B cell (primary cell): ENCODE measurements at regions of chr1 and their contacts with region 1.

Region 1: GRCh38 chr1:109426278-109427170 is at the start of gene PSMA5:
- DNase-seq: peak; percentile 97
- ATAC-seq: peak; percentile 95
- H3K4me3 ChIP-seq: peak within 1 kb of the TSS; percentile 72 to 98 (median 79)
- H3K4me3 Mint-ChIP-seq: peak within 1 kb of the TSS; percentile 98
- H3K27ac ChIP-seq: peak within 1 kb of the TSS; percentile 71 to 82
- H3K27ac Mint-ChIP-seq: peak within 1 kb of the TSS; percentile 98
- H3K4me1 ChIP-seq: peaks cover 13 to 19% of the 10 kb centered on the region in 2 donors
- H3K4me1 Mint-ChIP-seq: peaks cover 33% of the 10 kb centered on the region
- H3K27me3 ChIP-seq: no peaks in the 10 kb centered on the region
- H3K27me3 Mint-ChIP-seq: no peaks in the 10 kb centered on the region
- CTCF ChIP-seq: no peak
- total RNA-seq, gene PSMA5: 58.3 and 62.9 TPM in 2 replicates

Region 2: GRCh38 chr1:109213785-109214468 is 212.6 kb before region 1 on chr1 and contains the start of gene SARS1:
- CTCF ChIA-PET with region 1: no interaction called
- POLR2A ChIA-PET with region 1: no interaction called
- intact Hi-C with region 1: loop called (anchors 1 kb)
- DNase-seq: peak; percentile 93
- ATAC-seq: peak; percentile 88
- H3K4me3 ChIP-seq: peak within 1 kb of the TSS; percentile 88 to 97 (median 96)
- H3K4me3 Mint-ChIP-seq: peak within 1 kb of the TSS; percentile 100
- H3K27ac ChIP-seq: peak within 1 kb of the TSS; percentile 66 to 73
- H3K27ac Mint-ChIP-seq: peak within 1 kb of the TSS; percentile 98
- H3K4me1 ChIP-seq: peaks cover 22 to 24% of the 10 kb centered on the region in 2 donors
- H3K4me1 Mint-ChIP-seq: peaks cover 35% of the 10 kb centered on the region
- H3K27me3 ChIP-seq: no peaks in the 10 kb centered on the region
- H3K27me3 Mint-ChIP-seq: no peaks in the 10 kb centered on the region
- CTCF ChIP-seq: no peak
- total RNA-seq, gene SARS1: 115 and 119 TPM in 2 replicates

Region 3: GRCh38 chr1:109282952-109283747 is 143.4 kb before region 1 on chr1 and contains the start of gene PSRC1:
- CTCF ChIA-PET with region 1: no interaction called
- POLR2A ChIA-PET with region 1: no interaction called
- intact Hi-C with region 1: loop called (anchors 1 kb)
- DNase-seq: peak; percentile 94
- ATAC-seq: peak; percentile 99
- H3K4me3 ChIP-seq: peak within 1 kb of the TSS; percentile 68 to 93 (median 80)
- H3K4me3 Mint-ChIP-seq: peak within 1 kb of the TSS; percentile 97
- H3K27ac ChIP-seq: peak within 1 kb of the TSS in 1 of 2 donors; percentile 22
- H3K27ac Mint-ChIP-seq: peak within 1 kb of the TSS; percentile 88
- H3K4me1 ChIP-seq: peaks cover 12 to 19% of the 10 kb centered on the region in 2 donors
- H3K4me1 Mint-ChIP-seq: peaks cover 16% of the 10 kb centered on the region
- H3K27me3 ChIP-seq: no peaks in the 10 kb centered on the region
- H3K27me3 Mint-ChIP-seq: peaks cover 3% of the 10 kb centered on the region
- CTCF ChIP-seq: peak; percentile 71
- total RNA-seq, gene PSRC1: not detected in 2 replicates

Region 4: GRCh38 chr1:109361649-109362048 is 64.9 kb before region 1 on chr1:
- CTCF ChIA-PET with region 1: no interaction called
- POLR2A ChIA-PET with region 1: no interaction called
- intact Hi-C with region 1: no loop called
- DNase-seq: no peak
- ATAC-seq: no peak
- H3K4me3 ChIP-seq: no peak overlapping the region
- H3K4me3 Mint-ChIP-seq: no peak overlapping the region
- H3K27ac ChIP-seq: no peak overlapping the region
- H3K27ac Mint-ChIP-seq: no peak overlapping the region
- H3K4me1 ChIP-seq: no peaks in the 10 kb centered on the region
- H3K4me1 Mint-ChIP-seq: no peaks in the 10 kb centered on the region
- H3K27me3 ChIP-seq: peaks cover 0 to 2% (median 0%) of the 10 kb centered on the region in 4 experiments
- H3K27me3 Mint-ChIP-seq: peaks cover 41% of the 10 kb centered on the region
- CTCF ChIP-seq: no peak

Region 5: DNA sequence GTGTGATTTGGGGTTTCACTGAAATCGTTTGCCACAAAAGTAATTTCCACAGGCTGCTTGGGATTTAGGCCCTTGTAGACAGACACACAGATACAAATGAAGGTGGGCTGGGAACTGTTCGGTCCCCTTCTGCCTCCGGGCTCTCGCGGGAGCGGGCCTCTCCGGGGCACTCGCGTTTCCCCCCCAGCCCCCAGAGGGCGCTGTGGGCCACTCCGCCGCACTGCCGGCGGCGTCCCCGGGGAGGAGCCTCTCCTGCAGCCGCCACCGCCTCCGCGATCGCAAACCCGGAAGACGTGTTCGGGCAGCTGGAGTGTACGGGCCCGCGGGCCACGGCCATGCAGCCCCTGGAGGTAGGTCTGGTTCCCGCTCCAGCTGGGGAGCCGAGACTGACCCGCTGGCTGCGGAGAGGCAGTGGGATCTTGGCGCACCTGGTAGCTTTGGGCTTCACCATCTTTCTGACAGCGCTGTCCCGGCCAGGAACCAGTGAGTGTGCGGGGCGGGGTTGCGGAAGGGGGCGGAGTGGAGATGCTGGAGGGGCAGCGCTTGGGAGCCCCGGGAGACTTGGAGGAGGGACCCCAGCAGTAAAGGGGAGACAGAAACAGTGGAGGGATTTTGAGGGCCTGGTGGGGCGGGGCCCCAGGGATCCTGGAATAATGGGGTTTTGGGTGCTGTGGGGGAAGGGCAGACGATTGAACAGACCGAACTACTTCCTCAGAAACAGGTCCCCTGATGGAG is 67.4 kb after region 1 on chr1 and contains the start of gene CYB561D1:
- CTCF ChIA-PET with region 1: interaction called, 8 read pairs
- POLR2A ChIA-PET with region 1: interaction called, 4 read pairs
- intact Hi-C with region 1: loop called (anchors 1 kb)
- DNase-seq: peak; percentile 94
- ATAC-seq: peak; percentile 89
- H3K4me3 ChIP-seq: peak within 1 kb of the TSS; percentile 48 to 97 (median 88)
- H3K4me3 Mint-ChIP-seq: peak within 1 kb of the TSS; percentile 97
- H3K27ac ChIP-seq: peak within 1 kb of the TSS; percentile 14 to 46
- H3K27ac Mint-ChIP-seq: peak within 1 kb of the TSS; percentile 93
- H3K4me1 ChIP-seq: peaks cover 16 to 33% of the 10 kb centered on the region in 2 donors
- H3K4me1 Mint-ChIP-seq: peaks cover 40% of the 10 kb centered on the region
- H3K27me3 ChIP-seq: no peaks in the 10 kb centered on the region
- H3K27me3 Mint-ChIP-seq: no peaks in the 10 kb centered on the region
- CTCF ChIP-seq: peak; percentile 91
- total RNA-seq, gene CYB561D1: 28.0 and 29.0 TPM in 2 replicates

Region 6: DNA sequence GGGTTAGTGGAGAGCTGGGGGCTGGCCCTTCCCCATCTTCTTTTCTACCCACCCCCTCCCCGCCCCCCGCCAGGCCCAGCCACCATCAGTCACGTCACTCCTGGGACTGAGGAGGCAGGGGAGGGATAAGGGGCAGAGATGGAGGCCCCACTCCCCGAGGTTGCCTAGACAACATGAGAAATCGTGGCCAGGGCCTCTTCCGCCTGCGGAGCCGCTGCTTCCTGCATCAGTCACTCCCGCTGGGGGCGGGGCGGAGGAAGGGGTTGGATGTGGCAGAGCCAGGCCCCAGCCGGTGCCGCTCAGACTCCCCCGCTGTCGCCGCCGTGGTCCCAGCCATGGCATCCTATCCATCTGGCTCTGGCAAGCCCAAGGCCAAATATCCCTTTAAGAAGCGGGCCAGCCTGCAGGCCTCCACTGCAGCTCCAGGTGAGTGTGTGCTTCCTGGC is 194.3 kb after region 1 on chr1:
- CTCF ChIA-PET with region 1: no interaction called
- POLR2A ChIA-PET with region 1: no interaction called
- intact Hi-C with region 1: loop called (anchors 1 kb)
- DNase-seq: peak; percentile 86
- ATAC-seq: peak; percentile 59
- H3K4me3 ChIP-seq: peak overlapping the region; percentile 65 to 94 (median 84)
- H3K4me3 Mint-ChIP-seq: peak overlapping the region; percentile 99
- H3K27ac ChIP-seq: peak overlapping the region; percentile 64 to 90
- H3K27ac Mint-ChIP-seq: peak overlapping the region; percentile 96
- H3K4me1 ChIP-seq: peaks cover 50 to 65% of the 10 kb centered on the region in 2 donors
- H3K4me1 Mint-ChIP-seq: peaks cover 72% of the 10 kb centered on the region
- H3K27me3 ChIP-seq: no peaks in the 10 kb centered on the region
- H3K27me3 Mint-ChIP-seq: no peaks in the 10 kb centered on the region
- CTCF ChIP-seq: no peak